Ascending aorta (tissue), 2 donors: ENCODE measurements at regions of chr10 and their contacts with region 1.

Region 1: DNA sequence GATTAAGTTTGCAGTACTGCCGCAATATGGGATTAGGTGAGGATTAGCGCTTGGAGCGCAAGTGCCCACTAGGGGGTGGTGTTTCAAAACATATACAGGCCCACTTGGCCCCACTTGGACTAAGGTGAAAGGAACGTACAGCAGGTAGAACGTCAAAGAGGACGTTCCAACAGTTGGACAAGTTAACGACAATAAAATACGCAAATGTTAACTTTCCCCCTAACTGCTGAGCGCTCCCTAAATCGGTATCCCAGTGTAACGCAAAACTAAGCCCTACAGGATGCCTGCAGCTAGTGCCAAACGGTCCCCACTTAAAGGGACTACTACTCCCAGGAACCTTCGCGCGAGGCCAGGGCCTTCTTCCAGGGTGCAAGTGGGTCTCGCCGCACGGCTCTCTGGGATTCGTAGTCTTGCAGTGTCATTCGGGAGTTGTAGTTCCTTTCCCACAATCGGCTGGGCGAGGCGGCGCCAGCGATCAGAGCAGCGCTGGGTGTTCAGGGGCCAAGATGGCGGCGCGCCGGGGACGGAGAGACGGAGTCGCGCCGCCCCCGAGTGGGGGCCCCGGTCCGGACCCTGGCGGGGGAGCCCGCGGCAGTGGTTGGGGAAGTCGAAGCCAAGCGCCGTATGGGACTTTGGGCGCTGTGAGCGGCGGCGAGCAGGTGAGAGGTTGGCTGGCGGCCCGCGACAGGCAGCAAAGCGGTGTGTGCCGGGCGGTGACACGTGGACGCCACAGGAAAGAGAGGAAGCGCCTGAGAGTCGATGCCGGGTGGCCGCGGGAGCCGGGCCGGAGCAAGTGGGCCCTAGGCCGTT is at the start of gene PPRC1:
- DNase-seq: peak; percentile 97 to 100
- H3K4me3 ChIP-seq: peak within 1 kb of the TSS; percentile 76 to 81
- H3K27ac ChIP-seq: peak within 1 kb of the TSS; percentile 93 to 97
- H3K4me1 ChIP-seq: peaks cover 5 to 17% of the 10 kb centered on the region in 2 donors
- H3K27me3 ChIP-seq: no peaks in the 10 kb centered on the region
- CTCF ChIP-seq: peak; percentile 82 to 93 (median 86)
- total RNA-seq, gene PPRC1: 30.7 TPM

Region 2: GRCh38 chr10:102055647-102056419 is 76.9 kb before region 1 on chr10 and contains the start of gene ARMH3:
- intact Hi-C with region 1: loop called (anchors 5 kb)
- DNase-seq: peak; percentile 79 to 97
- H3K4me3 ChIP-seq: peak within 1 kb of the TSS; percentile 84 to 85
- H3K27ac ChIP-seq: peak within 1 kb of the TSS; percentile 92 to 93
- H3K4me1 ChIP-seq: peaks cover 0 to 13% of the 10 kb centered on the region in 2 donors
- H3K27me3 ChIP-seq: no peaks in the 10 kb centered on the region
- CTCF ChIP-seq: no peak
- total RNA-seq, gene ARMH3: 4.5 TPM

Region 3: GRCh38 chr10:102120142-102120990 is 12.4 kb before region 1 on chr10 and contains the start of gene LDB1:
- intact Hi-C with region 1: loop called (anchors 1 kb)
- DNase-seq: peak in 1 of 2 donors; percentile 86
- H3K4me3 ChIP-seq: peak within 1 kb of the TSS; percentile 88 to 94
- H3K27ac ChIP-seq: peak within 1 kb of the TSS; percentile 98 to 100
- H3K4me1 ChIP-seq: peaks cover 24 to 37% of the 10 kb centered on the region in 2 donors
- H3K27me3 ChIP-seq: no peaks in the 10 kb centered on the region
- CTCF ChIP-seq: peak in 1 of 3 experiments; percentile 34
- total RNA-seq, gene LDB1: 29.8 TPM

Region 4: GRCh38 chr10:102245101-102245931 is 112.5 kb after region 1 on chr10 and contains the start of gene GBF1:
- intact Hi-C with region 1: loop called (anchors 2 kb)
- DNase-seq: peak; percentile 89 to 97
- H3K4me3 ChIP-seq: peak within 1 kb of the TSS; percentile 66 to 92
- H3K27ac ChIP-seq: peak within 1 kb of the TSS; percentile 85 to 90
- H3K4me1 ChIP-seq: peaks cover 13 to 30% of the 10 kb centered on the region in 2 donors
- H3K27me3 ChIP-seq: no peaks in the 10 kb centered on the region
- CTCF ChIP-seq: no peak
- total RNA-seq, gene GBF1: 56.0 TPM